HCT116 (cell line): ENCODE measurements at regions of chr2 and their contacts with region 1.

Region 1: DNA sequence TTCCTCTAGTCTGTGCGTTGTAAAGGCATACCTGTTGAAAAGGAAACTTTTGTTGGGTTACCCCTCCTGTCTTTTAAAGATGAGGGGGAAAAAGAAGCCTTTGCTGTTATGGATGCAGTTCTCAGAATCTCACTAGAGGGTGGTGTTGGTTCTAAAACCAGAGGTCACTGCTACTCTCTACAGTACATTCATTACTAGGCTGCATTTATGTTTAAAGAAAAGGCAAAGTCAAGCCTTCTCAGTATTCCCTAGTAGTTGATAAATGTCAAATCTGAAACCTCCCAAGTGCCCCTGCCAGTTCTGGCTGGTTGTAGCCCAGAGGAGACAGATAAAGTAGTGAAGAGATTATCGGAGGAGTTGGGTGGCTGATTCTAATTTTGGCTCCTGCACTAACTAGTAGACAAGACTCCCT is 1.4 kb upstream of the PLCL1 start:
- DNase-seq: peak; percentile 45
- ATAC-seq: peak; percentile 60
- H3K4me3 ChIP-seq: no peak overlapping the region
- H3K27ac ChIP-seq: no peak overlapping the region
- H3K4me1 ChIP-seq: peaks cover 0 to 5% of the 10 kb centered on the region in 2 experiments; a peak in 1 of 4 replicates
- H3K27me3 ChIP-seq: peaks cover 37% of the 10 kb centered on the region; the same call in 1 of the 2 replicates
- CTCF ChIP-seq: peak; percentile 63 to 76 (median 64)
- POLR2A ChIP-seq: no peak
- RAD21 ChIP-seq: peak; percentile 84

Region 2: DNA sequence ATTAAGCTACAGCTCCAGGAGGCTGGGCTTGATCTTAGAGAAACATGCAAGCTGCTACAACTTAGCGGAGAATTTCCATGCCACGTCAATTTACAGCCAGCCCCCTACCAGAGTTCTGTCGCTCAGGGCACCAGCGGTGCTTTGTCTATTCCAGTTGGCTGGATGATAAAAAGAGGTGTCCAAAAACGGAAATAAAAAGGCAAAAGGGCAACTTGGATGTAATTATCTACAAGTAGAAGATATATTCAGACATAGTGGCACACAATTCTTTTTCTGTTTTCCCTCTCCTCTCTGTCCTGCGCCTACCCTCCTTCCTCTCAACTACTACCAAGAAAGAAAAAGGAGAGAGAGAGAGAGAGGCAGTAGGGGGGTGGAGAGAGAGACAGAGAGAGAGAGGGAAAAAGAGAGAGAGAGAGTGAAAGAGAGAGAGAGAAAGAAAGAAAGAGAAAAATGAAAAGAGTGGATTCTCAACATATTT is 127.3 kb before region 1 on chr2:
- CTCF ChIA-PET with region 1: no interaction called
- POLR2A ChIA-PET with region 1: no interaction called
- RAD21 ChIA-PET with region 1: no interaction called
- intact Hi-C with region 1: no loop called
- DNase-seq: no peak
- ATAC-seq: no peak
- H3K4me3 ChIP-seq: no peak overlapping the region
- H3K27ac ChIP-seq: no peak overlapping the region
- H3K4me1 ChIP-seq: no peaks in the 10 kb centered on the region
- H3K27me3 ChIP-seq: no peaks in the 10 kb centered on the region
- CTCF ChIP-seq: no peak
- POLR2A ChIP-seq: no peak
- RAD21 ChIP-seq: no peak

Region 3: GRCh38 chr2:198016243-198016642 is 213.2 kb after region 1 on chr2:
- CTCF ChIA-PET with region 1: no interaction called
- POLR2A ChIA-PET with region 1: no interaction called
- RAD21 ChIA-PET with region 1: no interaction called
- intact Hi-C with region 1: no loop called
- DNase-seq: no peak
- ATAC-seq: no peak
- H3K4me3 ChIP-seq: no peak overlapping the region
- H3K27ac ChIP-seq: no peak overlapping the region
- H3K4me1 ChIP-seq: no peaks in the 10 kb centered on the region
- H3K27me3 ChIP-seq: peaks cover 14% of the 10 kb centered on the region; the same call in 1 of the 2 replicates
- CTCF ChIP-seq: no peak
- POLR2A ChIP-seq: no peak
- RAD21 ChIP-seq: no peak

Region 4: GRCh38 chr2:198053776-198054698 is 251.0 kb after region 1 on chr2:
- CTCF ChIA-PET with region 1: no interaction called
- POLR2A ChIA-PET with region 1: no interaction called
- RAD21 ChIA-PET with region 1: no interaction called
- intact Hi-C with region 1: loop called (anchors 1 kb)
- DNase-seq: peak; percentile 1
- ATAC-seq: peak; percentile 88
- H3K4me3 ChIP-seq: no peak overlapping the region
- H3K27ac ChIP-seq: no peak overlapping the region
- H3K4me1 ChIP-seq: no peaks in the 10 kb centered on the region
- H3K27me3 ChIP-seq: peaks cover 13% of the 10 kb centered on the region; the same call in 1 of the 2 replicates
- CTCF ChIP-seq: peak; percentile 20 to 62 (median 59); a peak in 4 of 6 replicates
- POLR2A ChIP-seq: no peak
- RAD21 ChIP-seq: peak; percentile 37; the same call in 1 of the 2 replicates

Region 5: DNA sequence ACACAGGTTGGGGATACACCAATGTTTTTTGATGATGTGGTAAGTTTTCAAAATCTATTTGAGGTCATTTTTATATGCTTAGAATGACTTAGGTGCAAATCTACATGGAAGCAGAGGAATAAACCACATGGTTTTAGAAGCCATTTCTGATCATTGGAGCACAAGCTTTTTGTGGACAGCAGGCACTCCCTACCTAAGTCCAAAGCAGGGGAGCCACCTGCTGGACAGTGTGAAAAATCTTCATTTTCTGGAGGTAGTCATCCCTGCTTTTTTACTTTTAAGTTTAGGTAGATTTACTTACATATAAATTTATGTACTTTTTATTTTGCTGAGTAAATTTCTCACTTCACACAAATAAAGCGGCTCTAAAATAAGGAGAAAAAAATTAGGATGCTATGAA is 324.6 kb after region 1 on chr2:
- CTCF ChIA-PET with region 1: interaction called, 9 read pairs
- POLR2A ChIA-PET with region 1: no interaction called
- RAD21 ChIA-PET with region 1: interaction called, 3 to 6 read pairs
- intact Hi-C with region 1: loop called (anchors 1 kb)
- DNase-seq: peak; percentile 51
- ATAC-seq: peak; percentile 73; the same call in 1 of the 2 replicates
- H3K4me3 ChIP-seq: no peak overlapping the region
- H3K27ac ChIP-seq: no peak overlapping the region
- H3K4me1 ChIP-seq: no peaks in the 10 kb centered on the region
- H3K27me3 ChIP-seq: peaks cover 15% of the 10 kb centered on the region; the same call in 1 of the 2 replicates
- CTCF ChIP-seq: peak; percentile 63 to 66 (median 66); a peak in 5 of 6 replicates
- POLR2A ChIP-seq: no peak
- RAD21 ChIP-seq: peak; percentile 76